Posterior vena cava (tissue), 2 donors: ENCODE measurements at regions of chr1 and their contacts with region 1.

Region 1: DNA sequence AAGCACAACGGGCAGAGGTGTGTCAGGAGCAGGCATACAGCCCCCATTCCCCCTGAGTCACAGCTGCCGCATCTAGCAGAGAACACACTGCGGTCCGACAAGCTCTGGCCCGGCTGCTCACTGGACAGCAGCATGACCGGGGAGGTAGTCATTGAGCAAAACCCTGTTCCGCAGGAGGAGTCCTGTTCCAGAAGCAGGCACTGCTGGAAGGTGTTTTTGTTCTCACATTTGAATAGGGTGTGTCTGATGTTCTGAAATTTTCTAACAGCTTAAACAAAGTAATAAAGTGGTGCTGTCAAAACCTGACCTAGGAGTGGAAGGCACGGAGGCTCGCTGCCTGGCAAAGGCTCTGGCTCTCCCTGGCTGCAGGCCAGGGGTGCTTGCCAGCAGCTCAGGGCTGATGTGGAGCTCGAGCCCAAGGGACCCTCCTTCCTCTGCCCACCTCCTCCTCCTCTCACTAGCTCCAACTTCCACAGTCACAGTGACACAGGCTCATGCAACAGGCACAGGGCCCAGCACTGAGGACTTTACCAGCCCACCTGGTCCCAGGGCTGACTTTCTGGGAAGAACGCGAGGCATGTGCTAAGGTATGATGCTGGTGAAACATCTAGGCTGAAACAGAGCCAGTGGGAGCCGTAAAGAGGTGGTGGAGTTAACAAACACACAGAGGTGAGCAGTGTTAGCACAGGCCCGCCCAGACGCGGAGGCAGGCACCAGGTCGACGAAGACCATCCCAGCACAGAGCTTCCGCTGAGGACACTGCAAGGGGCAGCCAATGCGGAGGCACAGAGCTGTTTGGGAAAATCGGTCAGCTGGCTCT is 118.6 kb upstream of the IFFO2 start:
- DNase-seq: no peak

Region 2: DNA sequence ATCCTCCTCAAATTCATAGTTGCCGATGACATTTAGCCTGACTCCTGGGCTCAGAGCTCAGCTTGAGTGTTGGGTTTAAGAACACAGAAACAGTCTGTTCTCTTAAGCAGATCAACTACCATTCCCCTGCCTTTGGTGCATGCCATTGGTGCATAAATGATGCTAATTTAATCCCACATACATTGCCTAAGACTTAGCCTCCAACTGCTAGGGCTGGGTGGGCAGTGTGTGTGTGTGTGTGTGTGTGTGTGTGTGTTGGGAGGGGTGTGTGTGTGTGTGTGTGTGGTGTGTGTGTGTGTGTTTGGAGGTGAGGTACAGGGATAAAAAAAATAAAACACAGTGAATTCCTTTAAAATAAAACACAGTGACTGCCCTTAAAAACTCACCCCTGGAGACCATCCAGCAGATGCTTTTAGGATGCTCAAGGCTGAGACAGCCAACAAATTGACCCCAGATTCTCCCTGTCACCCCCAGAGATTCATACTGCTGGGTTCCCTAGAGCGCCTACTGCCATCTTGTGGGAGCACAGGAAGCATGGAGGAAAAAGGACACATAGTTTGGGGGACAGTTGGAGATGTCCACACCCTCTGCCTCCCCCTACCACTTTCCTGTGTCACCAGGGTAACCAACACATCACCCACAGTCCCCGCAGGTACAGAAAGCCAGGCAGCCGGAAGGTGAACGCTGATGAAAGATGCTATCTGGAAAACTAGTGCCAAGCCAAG is 563.8 kb before region 1 on chr1:
- intact Hi-C with region 1: no loop called
- DNase-seq: no peak

Region 3: DNA sequence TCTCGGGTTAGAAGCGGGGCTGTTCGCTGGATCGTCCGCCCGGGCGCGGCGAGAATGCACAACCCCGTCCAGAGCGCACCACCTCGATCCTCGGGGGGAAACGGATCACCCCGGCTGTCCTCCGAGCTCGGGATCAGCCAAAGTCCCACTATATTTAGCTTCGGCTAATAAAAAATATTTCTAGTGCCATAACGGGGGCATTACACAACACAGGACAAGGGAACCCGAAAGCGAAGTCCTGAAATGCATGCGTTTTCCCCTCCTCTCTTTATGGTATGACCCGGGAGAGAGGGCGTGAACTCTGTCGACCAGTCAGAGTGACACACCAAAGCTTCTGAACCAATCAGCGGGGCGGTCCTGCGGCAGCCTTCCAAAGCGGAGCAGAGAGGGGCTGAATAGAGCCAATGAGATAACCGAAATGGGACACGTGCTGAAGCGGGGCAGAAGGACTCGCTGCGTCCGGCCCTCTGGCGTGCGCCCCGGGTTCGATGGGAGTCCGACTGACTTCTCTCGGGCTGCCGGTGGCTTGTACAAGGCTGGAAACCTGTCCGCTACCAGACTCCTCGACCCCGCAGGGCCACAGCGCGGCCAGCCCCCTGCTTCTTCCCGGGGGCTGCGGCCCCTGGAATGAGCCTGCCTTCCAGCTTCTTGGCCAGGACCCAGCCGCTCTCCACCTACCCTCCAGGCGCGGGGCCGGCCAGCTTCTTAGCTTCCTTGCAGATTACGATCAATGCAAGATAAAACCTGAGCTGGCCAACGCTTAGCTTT is 172.4 kb before region 1 on chr1 and contains the start of gene ALDH4A1:
- intact Hi-C with region 1: loop called in 1 of 2 experiments (anchors 10 kb)
- DNase-seq: peak; percentile 99
- total RNA-seq, gene ALDH4A1: 8.5 to 17.0 TPM

Region 4: DNA sequence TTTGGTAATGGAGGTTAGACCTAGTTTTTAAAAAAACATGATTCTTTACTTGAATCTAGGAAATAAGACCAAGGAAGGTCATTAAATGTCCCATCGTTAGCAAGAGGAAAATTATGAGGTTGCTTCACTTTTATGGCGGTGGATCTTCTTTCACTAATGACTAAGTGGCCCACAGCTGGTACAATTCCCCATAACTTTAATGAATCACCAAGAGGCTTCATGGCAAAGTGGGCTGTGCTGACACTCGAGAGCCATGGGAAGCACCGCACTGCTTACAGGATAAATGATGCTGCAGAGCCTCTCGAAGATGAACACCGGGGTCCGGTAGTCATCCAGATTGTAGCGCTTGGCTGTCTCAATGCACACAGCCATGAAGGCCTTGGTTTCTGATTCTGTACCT is 26.1 kb after region 1 on chr1:
- intact Hi-C with region 1: no loop called
- DNase-seq: no peak